Sigmoid colon (tissue), 7 donors: ENCODE measurements at regions of chr14 and their contacts with region 1.

Region 1: DNA sequence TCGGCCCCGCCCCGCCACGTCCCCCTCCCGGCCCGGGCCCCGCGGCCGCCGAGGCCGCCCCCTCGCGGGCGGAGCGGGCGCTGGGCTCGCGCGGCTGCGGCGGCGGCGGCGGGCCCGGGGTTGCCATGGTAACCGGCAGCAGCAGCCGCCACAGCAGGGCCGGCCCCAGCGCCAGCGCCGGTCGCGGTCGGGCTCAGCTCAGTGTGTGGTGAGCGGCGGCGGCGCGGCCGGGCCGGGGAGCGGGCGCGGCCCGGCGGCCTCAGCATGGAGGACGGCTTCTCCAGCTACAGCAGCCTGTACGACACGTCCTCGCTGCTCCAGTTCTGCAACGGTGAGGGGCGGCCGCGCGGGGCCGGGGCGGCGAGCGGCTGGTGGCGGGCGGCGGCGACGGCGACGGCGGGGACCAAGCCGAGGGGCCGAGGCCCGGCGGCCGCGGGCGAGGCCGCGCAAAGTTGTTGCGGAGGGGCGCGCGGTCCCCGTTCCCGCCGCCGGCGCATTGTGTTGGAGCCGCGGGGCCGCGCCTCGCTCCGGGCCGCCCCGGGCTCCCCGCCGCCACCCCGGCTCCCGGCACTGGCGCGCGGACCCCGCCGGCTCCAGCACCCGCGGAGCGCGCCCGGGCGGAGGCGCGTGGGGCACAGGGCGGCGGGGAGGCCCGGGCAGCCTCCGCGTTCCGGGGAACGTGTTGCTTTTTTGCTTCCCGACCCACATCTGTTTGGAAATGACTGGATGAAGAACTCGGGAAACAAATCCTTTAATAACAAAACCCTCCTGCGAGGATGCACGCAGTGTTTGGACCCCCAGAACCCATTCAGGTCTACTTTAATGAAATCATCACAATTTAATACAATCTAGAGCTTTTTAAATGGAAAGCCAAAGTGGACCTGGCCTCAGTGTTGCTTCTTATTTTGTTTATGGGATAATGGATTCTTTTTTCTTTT is at the start of gene EML1:
- DNase-seq: peak; percentile 93
- H3K4me3 ChIP-seq: peak within 1 kb of the TSS; percentile 44 to 63 (median 60)
- H3K27ac ChIP-seq: peak within 1 kb of the TSS; percentile 92 to 97 (median 96)
- H3K4me1 ChIP-seq: peaks cover 0 to 74% (median 57%) of the 10 kb centered on the region in 4 donors
- H3K27me3 ChIP-seq: no peaks in the 10 kb centered on the region
- CTCF ChIP-seq: no peak
- EP300 ChIP-seq: no peak
- POLR2A ChIP-seq: no peak
- total RNA-seq, gene EML1: 91.5 to 148 (median 141) TPM

Region 2: GRCh38 chr14:99683619-99684355 is 109.7 kb before region 1 on chr14 and contains the start of gene CYP46A1:
- intact Hi-C with region 1: loop called (anchors 5 kb)
- DNase-seq: peak; percentile 100
- H3K4me3 ChIP-seq: peak within 1 kb of the TSS; percentile 80 to 96 (median 87)
- H3K27ac ChIP-seq: peak within 1 kb of the TSS; percentile 92 to 97 (median 94)
- H3K4me1 ChIP-seq: peaks cover 0 to 17% (median 14%) of the 10 kb centered on the region in 4 donors
- H3K27me3 ChIP-seq: peaks cover 0 to 7% (median 0%) of the 10 kb centered on the region in 3 donors
- CTCF ChIP-seq: no peak
- EP300 ChIP-seq: no peak
- POLR2A ChIP-seq: no peak
- total RNA-seq, gene CYP46A1: 0.36 to 2.0 (median 1.6) TPM

Region 3: DNA sequence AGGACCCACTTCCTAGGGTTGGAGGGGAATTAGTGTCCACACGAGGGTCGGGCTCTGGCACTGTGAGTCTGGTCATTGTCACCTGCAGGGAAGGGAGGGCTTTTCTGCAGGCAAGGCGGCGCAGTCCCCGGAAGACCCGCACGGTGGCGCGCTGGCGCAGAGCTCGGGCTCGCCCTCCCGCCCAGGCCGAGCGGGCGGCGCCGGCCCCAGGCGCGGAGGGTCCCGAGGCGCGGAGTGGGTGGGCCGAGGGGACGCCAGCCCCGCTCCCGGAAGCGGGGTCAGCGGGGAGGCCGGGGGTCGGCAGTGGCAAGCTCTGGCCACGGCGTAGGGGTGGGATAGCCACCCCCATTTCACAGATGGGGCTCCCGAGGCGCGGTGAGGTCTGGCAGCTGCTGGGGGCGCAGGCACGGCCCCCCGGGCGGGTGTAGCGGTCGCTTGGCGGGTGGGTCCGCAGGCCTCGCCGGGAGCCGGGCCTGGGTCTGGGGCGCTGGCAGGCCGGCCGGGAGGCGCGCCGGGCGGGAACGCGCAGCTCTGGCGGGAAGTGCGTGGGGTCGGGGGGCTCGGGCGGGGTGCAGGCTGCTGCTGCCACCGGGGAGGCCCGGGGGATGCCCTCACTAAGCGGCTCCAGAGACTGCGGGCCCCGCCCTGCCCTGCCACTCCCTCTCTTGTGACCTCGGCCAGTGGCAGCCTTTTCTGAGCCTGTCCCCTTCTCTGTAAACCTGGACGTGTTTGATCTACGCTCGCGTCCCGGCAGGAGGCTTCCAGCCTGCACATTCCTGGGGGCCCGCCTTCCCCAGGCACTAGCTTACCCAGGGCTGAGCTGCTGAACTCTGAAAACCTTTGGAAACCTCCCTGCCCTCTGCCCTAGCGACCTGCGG is 63.3 kb before region 1 on chr14:
- intact Hi-C with region 1: loop called (anchors 2 kb)
- DNase-seq: peak; percentile 85
- H3K4me3 ChIP-seq: peak overlapping the region; percentile 40 to 84 (median 70)
- H3K27ac ChIP-seq: peak overlapping the region; percentile 38 to 70 (median 66)
- H3K4me1 ChIP-seq: peaks cover 0 to 28% (median 26%) of the 10 kb centered on the region in 4 donors
- H3K27me3 ChIP-seq: no peaks in the 10 kb centered on the region
- CTCF ChIP-seq: peak; percentile 42 to 95 (median 81)
- EP300 ChIP-seq: no peak
- POLR2A ChIP-seq: no peak

Region 4: GRCh38 chr14:99737956-99738667 is 55.4 kb before region 1 on chr14:
- intact Hi-C with region 1: loop called (anchors 2 kb)
- DNase-seq: peak; percentile 77
- H3K4me3 ChIP-seq: peak overlapping the region; percentile 52 to 70 (median 64)
- H3K27ac ChIP-seq: peak overlapping the region; percentile 85 to 90 (median 87)
- H3K4me1 ChIP-seq: peaks cover 0 to 56% (median 43%) of the 10 kb centered on the region in 4 donors
- H3K27me3 ChIP-seq: no peaks in the 10 kb centered on the region
- CTCF ChIP-seq: no peak
- EP300 ChIP-seq: no peak
- POLR2A ChIP-seq: no peak

Region 5: DNA sequence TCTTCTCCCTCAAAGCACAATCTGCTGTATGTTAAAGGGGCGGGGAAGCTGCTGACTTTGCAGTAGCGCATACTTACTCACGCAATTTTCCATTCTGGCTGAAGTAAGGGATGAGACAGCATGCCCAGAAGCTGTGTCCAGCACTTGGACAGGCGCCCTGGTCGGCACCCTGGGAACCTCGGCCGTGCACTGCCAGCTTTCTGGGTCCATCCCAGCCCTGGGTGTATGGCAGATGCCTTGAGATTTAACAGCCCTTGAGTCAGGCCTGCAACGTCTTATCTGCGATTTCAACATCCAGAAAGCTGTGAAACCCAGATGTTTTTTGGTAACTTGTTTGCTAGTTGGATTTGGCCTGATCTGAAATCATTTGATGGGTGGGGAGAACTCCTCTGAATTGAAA is 15.9 kb after region 1 on chr14:
- intact Hi-C with region 1: loop called (anchors 2 kb)
- DNase-seq: peak; percentile 95
- H3K4me3 ChIP-seq: no peak overlapping the region
- H3K27ac ChIP-seq: peak overlapping the region; percentile 75 to 84 (median 80)
- H3K4me1 ChIP-seq: peaks cover 0 to 78% (median 63%) of the 10 kb centered on the region in 4 donors
- H3K27me3 ChIP-seq: no peaks in the 10 kb centered on the region
- CTCF ChIP-seq: no peak
- EP300 ChIP-seq: peak in 2 of 4 donors; percentile 34 to 44
- POLR2A ChIP-seq: no peak

Region 6: DNA sequence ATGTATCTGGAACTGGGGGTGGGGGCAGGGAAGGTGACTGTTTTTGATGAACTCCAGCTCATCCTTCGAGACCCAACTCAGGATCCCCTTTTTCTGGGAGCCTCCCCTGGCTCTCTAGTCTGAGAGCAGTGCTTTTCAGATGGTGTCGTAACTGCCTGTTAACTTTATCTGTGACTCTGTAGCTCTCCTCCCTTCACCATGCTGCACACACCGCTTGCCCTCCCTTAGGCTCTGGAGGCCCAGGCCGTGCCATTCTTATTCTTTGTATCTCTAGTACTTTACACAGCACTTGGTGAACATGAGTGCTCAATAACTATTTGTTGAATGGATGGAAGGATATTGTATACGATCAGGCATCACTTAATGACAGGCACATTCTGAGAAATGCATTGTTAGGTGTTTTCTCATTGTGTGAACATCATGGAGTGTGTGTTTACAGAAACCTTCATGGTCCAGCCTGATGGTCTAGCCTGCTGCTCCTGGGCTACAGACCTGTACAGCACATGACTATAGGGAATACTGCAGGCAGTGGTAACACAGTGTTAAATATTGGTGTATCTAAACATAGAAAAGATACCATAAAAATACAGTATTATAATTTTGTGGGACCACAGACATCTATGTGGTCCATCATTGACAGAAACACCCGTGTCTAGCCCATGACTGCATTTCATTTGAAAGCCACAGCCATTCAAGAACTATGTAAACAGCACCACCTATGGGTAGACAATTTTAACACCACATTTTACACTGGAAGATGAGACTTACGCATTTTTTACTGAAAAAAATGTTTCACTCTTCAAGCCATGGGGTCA is 91.6 kb after region 1 on chr14:
- intact Hi-C with region 1: loop called (anchors 5 kb)
- DNase-seq: peak; percentile 70
- H3K4me3 ChIP-seq: no peak overlapping the region
- H3K27ac ChIP-seq: no peak overlapping the region
- H3K4me1 ChIP-seq: peaks cover 0 to 17% (median 14%) of the 10 kb centered on the region in 4 donors
- H3K27me3 ChIP-seq: no peaks in the 10 kb centered on the region
- CTCF ChIP-seq: peak; percentile 72 to 85 (median 76)
- EP300 ChIP-seq: no peak
- POLR2A ChIP-seq: no peak

Region 7: GRCh38 chr14:99968191-99968920 is 174.9 kb after region 1 on chr14:
- intact Hi-C with region 1: no loop called
- DNase-seq: no peak
- H3K4me3 ChIP-seq: no peak overlapping the region
- H3K27ac ChIP-seq: no peak overlapping the region
- H3K4me1 ChIP-seq: peaks cover 0 to 17% (median 9%) of the 10 kb centered on the region in 4 donors
- H3K27me3 ChIP-seq: peaks cover 0 to under 1% (median 0%) of the 10 kb centered on the region in 3 donors
- CTCF ChIP-seq: no peak
- EP300 ChIP-seq: no peak
- POLR2A ChIP-seq: no peak